A549 (cell line): ENCODE measurements at regions of chr15 and their contacts with region 1.

Region 1: DNA sequence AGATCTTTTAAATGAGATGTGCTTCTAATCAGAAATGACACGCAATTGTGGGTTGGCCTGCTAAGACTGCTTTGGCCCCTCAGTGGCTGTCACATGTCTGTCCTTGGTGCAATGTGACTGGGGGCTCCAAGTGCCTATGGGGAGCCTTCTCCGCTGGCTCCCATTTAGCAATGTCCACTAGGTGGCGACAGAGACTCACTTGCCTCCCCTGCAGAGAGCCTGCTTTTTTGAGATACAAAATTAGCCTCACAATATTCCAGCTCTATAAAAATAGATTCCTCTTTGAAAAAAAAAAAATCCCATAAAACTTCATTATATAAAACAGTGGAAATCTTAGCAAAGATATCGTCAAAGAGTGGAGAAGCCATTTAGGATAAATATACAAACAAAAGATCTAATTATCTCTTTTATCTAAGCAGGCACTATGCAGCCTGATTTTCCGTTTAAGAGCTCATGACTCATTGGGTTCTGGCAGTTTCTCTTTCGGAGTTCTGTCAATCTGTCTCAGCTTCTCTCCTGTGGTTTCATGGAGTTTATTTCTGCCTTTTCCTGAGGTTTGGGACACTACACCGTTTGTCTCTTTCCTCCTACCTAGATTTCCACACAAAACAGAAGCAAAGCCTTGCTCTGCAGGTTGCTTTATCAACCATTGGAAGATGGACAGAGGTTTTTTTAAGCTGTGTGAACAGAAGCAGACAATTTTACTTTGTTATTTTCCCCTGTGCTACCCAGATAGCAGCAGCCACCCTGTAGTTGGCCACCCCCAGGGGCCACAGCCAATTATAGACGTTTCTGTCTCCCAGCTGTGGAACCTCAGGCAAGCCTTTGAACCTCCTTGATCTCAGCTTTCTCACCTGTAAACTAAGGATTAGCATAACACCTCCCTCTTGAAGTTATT is 68.4 kb upstream of the TNFAIP8L3 start:
- DNase-seq: peak; percentile 64 to 89
- ATAC-seq: peak; percentile 93 to 98
- H3K4me3 ChIP-seq: 0 out of 3 replicates have a peak overlapping the region, but pooled peaks have one; percentile 13
- H3K27ac ChIP-seq: no peak overlapping the region
- H3K4me1 ChIP-seq: no peaks in the 10 kb centered on the region
- CTCF ChIP-seq: peak; percentile 99
- EP300 ChIP-seq: no peak
- POLR2A ChIP-seq: no peak
- RAD21 ChIP-seq: peak; percentile 94

Region 2: DNA sequence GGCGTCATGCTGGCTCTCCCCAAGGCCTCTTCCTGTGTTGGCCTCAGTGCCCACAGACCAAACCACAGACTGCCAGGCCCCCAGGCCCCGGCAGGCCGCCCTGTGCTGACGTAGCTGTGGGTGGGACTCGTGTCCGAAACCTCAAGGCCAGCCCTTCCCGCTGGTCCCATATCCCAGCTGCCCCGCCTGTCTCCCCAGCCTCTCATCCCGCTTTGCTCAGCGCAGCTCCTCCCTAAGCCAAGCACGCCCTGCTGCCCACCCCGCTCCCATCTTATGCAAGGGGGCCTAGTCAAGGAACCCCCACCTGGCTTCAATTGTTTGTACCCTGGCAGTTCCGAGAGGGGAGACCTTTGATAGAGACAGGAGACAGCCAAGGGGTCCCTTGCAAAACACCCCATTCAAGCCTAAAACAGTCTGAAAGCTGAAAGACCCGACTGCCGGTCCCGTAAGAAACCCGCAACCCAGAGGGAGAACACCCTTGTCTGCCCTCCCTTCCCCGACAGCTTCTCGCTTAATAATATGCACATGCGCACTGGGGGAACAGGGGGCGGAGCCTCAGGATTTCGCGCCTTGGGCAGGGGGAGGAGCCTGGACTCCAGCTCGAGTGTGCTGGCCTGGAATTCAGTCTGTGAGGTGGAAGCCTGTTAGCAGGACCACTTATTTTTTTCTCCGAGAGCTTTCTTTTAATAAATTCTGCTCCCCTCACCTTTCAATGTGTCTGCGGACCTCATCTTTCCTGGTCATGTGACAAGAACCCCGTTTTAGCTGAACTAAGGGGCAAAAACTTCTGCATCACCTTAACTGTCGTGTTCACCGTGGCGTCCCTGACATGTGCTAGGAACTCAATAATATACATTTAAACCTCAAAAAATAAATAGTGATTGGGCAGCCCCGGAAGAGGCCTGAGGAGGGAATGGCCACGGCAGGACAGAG is 85.6 kb before region 1 on chr15:
- CTCF ChIA-PET with region 1: interaction called, 13 read pairs
- POLR2A ChIA-PET with region 1: no interaction called
- DNase-seq: no peak
- ATAC-seq: no peak
- H3K4me3 ChIP-seq: no peak overlapping the region
- H3K27ac ChIP-seq: no peak overlapping the region
- H3K4me1 ChIP-seq: no peaks in the 10 kb centered on the region
- CTCF ChIP-seq: no peak
- EP300 ChIP-seq: no peak
- POLR2A ChIP-seq: no peak
- RAD21 ChIP-seq: no peak

Region 3: DNA sequence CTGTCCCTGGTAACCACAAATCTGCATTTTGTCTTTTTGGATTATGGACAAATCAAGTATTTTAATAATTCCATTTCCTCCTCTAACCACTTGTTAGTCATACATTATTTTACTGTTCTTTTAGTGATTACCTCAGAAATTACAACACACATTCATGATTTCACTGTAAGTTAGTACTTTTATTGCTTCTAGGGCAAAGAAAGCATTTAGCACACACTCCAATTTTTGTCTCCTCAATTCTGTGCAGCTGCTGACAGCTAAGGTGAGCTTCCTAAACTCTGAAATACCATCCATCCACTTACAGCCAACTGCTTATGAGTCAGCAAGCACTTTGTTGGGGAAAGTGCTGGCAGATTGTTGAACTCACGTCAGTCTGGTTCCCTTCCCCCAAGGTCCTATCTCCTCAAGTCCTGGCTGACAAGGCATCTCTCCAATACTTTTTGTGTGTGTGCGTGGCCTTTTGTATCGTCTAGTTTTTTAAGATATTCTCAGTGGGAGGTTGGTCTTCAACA is 19.0 kb before region 1 on chr15:
- CTCF ChIA-PET with region 1: interaction called, 94 read pairs
- POLR2A ChIA-PET with region 1: no interaction called
- DNase-seq: peak; percentile 25 to 57
- ATAC-seq: peak; percentile 68 to 74; a peak in 5 of 6 replicates
- H3K4me3 ChIP-seq: no peak overlapping the region
- H3K27ac ChIP-seq: peak overlapping the region in 1 of 2 experiments; percentile 25; a peak in 2 of 6 replicates
- H3K4me1 ChIP-seq: peaks cover 9% of the 10 kb centered on the region; the same call in 1 of the 3 replicates
- CTCF ChIP-seq: no peak
- EP300 ChIP-seq: no peak
- POLR2A ChIP-seq: no peak
- RAD21 ChIP-seq: no peak

Region 4: GRCh38 chr15:51203797-51204196 is 40.7 kb after region 1 on chr15:
- CTCF ChIA-PET with region 1: interaction called, 64 read pairs
- POLR2A ChIA-PET with region 1: no interaction called
- DNase-seq: peak in 1 of 2 experiments; percentile 19
- ATAC-seq: peak; percentile 51 to 66; a peak in 5 of 6 replicates
- H3K4me3 ChIP-seq: no peak overlapping the region
- H3K27ac ChIP-seq: no peak overlapping the region
- H3K4me1 ChIP-seq: 0 out of 3 replicates have a peak, but pooled peaks cover 12% of the 10 kb centered on the region
- CTCF ChIP-seq: no peak
- EP300 ChIP-seq: no peak
- POLR2A ChIP-seq: no peak
- RAD21 ChIP-seq: no peak

Region 5: DNA sequence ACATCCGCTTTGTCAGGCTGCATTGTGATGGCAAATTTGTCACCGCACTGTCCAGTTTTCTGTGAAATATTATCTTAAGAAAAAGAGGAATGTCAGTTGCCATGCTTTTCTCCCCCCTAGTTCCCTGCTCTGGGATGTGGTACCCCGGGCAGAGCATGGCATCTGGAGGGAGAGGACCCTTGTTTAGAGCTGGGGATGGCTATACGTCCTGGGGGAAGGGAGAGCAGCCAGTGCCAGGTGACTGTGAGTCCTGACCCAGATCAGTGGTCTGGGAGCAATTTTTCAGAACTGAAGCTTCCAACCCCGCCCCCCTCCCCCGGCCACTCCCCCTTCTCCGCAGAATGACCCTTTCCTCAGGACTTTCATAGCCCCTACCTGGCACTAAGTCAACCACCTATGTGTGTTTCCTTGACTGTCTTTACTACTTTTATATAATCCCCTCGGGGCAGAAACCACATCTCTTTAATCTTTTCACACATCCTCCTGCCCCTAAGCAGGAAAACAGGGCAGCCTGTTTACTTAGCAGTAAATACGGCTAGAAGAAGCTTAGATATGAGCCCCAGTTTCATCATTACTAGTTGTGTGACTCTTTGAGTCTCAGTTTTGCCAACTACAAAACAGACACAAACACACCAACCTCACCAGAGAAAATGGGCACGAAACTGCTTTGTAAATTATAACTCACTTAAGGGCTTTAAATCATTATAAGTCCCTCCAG is 76.8 kb after region 1 on chr15:
- CTCF ChIA-PET with region 1: interaction called, 19 read pairs
- POLR2A ChIA-PET with region 1: no interaction called
- DNase-seq: no peak
- ATAC-seq: no peak
- H3K4me3 ChIP-seq: no peak overlapping the region
- H3K27ac ChIP-seq: no peak overlapping the region
- H3K4me1 ChIP-seq: 0 out of 3 replicates have a peak, but pooled peaks cover 4% of the 10 kb centered on the region
- CTCF ChIP-seq: no peak
- EP300 ChIP-seq: no peak
- POLR2A ChIP-seq: no peak
- RAD21 ChIP-seq: no peak

Region 6: GRCh38 chr15:51366960-51367648 is 204.0 kb after region 1 on chr15:
- CTCF ChIA-PET with region 1: interaction called, 12 read pairs
- POLR2A ChIA-PET with region 1: no interaction called
- DNase-seq: peak in 1 of 2 experiments; percentile 82
- ATAC-seq: peak; percentile 58 to 80; a peak in 5 of 6 replicates
- H3K4me3 ChIP-seq: no peak overlapping the region
- H3K27ac ChIP-seq: peak overlapping the region; percentile 13 to 27; a peak in 4 of 6 replicates
- H3K4me1 ChIP-seq: peaks cover 40% of the 10 kb centered on the region
- CTCF ChIP-seq: no peak
- EP300 ChIP-seq: no peak
- POLR2A ChIP-seq: no peak
- RAD21 ChIP-seq: no peak

Region 7: GRCh38 chr15:51401872-51402517 is 238.9 kb after region 1 on chr15:
- CTCF ChIA-PET with region 1: interaction called, 131 read pairs
- POLR2A ChIA-PET with region 1: no interaction called
- DNase-seq: peak; percentile 44 to 80
- ATAC-seq: peak; percentile 41 to 82; a peak in 5 of 6 replicates
- H3K4me3 ChIP-seq: no peak overlapping the region
- H3K27ac ChIP-seq: no peak overlapping the region
- H3K4me1 ChIP-seq: no peaks in the 10 kb centered on the region
- CTCF ChIP-seq: peak; percentile 57
- EP300 ChIP-seq: no peak
- POLR2A ChIP-seq: no peak
- RAD21 ChIP-seq: peak; percentile 48 to 74; a peak in 3 of 5 replicates

Region 8: DNA sequence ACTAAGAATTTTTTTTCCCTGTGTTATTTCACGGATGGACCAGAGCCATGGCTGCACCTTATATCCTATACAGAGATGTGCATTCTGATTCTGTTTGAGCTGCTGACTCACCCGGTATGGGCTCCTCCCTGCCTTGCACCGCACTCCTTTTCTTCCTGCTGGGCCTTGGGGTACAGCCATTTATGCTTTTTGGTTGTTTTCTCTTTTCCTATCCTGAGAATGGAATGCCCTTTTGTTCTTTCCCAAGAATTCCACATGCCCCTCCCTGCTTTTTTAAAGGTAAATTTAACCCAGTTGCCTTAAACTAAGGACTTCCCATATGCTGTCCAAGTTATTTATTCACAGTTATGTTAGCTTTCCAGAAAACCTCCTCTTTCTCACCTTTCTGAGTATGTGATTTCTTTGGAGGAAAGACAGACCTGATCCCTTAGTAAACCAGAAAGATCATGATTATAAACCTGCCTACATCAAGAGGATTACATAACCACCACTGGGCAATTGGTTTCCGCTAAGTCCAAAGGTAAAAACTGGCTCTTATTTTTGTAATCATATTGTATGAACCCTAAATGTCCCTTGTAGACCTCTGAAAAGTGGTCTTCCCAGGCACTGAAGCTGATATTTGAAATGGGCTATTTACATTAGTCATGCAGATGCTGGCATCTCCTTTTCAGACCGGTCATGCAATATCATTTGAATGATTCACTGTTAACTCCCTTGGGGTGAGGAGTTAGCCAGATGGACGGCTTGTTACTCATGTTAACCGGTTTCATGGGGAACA is 711.8 kb after region 1 on chr15:
- CTCF ChIA-PET with region 1: no interaction called
- POLR2A ChIA-PET with region 1: no interaction called
- DNase-seq: peak; percentile 85 to 98
- ATAC-seq: peak; percentile 93 to 94
- H3K4me3 ChIP-seq: peak overlapping the region; percentile 25
- H3K27ac ChIP-seq: peak overlapping the region; percentile 89 to 95
- H3K4me1 ChIP-seq: peaks cover 75% of the 10 kb centered on the region
- CTCF ChIP-seq: no peak
- EP300 ChIP-seq: peak; percentile 63 to 80; a peak in 4 of 5 replicates
- POLR2A ChIP-seq: no peak
- RAD21 ChIP-seq: peak; percentile 17 to 21; a peak in 2 of 5 replicates